ENCODE measurements at regions of chr1 and their contacts with region 1.

Region 1: DNA sequence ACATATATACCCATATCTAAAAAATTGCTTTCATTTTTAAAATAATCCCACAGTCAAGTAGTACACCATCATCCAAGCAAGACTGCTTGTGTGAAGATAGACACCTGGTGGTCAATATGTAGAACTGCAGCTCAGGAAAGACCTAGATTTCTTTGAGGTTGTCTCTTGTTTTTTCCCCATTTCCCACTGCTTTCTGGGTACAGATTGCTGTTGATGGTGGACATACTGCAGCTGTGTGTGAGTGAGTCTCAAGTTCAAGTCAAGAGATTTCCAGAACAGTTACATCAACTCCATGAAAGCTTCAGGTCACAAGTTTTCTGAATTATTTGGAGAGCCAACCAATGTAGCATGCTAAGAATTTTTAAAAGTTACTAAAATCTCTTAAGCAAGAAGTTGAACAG is 306.4 kb downstream of the DUSP10 start:
- DNase-seq: peak; percentile 47

Region 2: DNA sequence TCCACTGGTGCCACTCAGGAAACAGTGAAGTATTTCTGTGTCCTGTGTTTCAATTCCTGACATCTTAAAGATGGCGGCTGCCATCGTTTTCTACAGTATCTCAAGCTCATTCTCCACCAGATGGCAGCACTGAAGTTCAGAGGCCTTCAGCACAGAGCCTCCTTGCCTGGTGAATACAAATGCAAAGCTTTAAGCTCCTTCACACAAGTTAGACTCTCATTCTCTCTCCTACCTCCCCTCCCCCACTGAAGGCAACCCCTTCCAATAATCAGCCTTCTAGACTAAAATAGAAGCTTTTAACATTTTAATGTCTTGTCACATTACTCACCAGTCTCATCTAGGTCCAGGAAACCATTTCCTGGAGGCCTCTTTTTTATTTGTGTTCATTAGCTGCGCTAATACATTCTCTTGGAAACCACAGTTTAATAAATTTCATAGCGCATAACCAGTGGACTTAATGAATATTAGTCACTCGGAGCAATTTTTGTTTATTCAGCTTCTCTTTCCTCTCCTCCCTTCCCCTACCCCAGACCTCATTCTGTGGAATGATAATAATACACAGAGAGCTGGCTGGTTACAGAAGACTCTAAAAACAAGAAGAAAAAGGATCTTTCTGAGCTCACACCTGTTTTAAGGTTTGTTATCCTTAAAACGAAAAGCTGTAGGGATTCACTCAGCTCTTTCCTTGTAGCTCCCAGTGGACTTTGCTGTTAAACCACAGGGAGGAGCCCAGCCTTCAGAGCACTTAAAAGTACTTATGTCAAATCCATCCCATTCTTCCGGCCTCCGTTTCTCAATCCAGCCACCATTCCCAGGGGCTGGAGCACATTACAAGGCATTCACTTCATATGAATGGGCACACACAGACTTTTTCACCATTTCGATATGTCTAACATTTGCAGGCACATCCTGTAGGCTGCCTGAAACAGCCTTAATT is 171.4 kb before region 1 on chr1:
- CTCF ChIA-PET with region 1: interaction called, 26 read pairs
- POLR2A ChIA-PET with region 1: interaction called, 3 read pairs
- DNase-seq: peak; percentile 77